Naive thymus-derived CD4-positive, alpha-beta T cell (primary cell): ENCODE measurements at regions of chr17 and their contacts with region 1.

Region 1: GRCh38 chr17:75412455-75413317 is 7.2 kb upstream of the GRB2 start:
- DNase-seq: peak; percentile 52 to 82 (median 73)
- ATAC-seq: peak; percentile 88
- H3K4me3 ChIP-seq: peak overlapping the region; percentile 25
- H3K4me3 Mint-ChIP-seq: peak overlapping the region; percentile 23 to 75 (median 60)
- H3K27ac ChIP-seq: peak overlapping the region; percentile 19
- H3K27ac Mint-ChIP-seq: peak overlapping the region in 6 of 9 donors; percentile 15 to 87 (median 45)
- H3K4me1 ChIP-seq: peaks cover 3 to 13% of the 10 kb centered on the region in 2 donors
- H3K4me1 Mint-ChIP-seq: peaks cover 14 to 26% (median 23%) of the 10 kb centered on the region in 7 donors
- H3K27me3 ChIP-seq: no peaks in the 10 kb centered on the region
- H3K27me3 Mint-ChIP-seq: peaks cover 0 to 27% (median 0%) of the 10 kb centered on the region in 5 donors

Region 2: GRCh38 chr17:75199886-75200618 is 212.6 kb before region 1 on chr17:
- CTCF ChIA-PET with region 1: interaction called, 3 read pairs
- POLR2A ChIA-PET with region 1: no interaction called
- intact Hi-C with region 1: loop called in 1 of 2 experiments (anchors 2 kb)
- DNase-seq: no peak
- ATAC-seq: no peak
- H3K4me3 ChIP-seq: no peak overlapping the region
- H3K4me3 Mint-ChIP-seq: no peak overlapping the region
- H3K27ac ChIP-seq: no peak overlapping the region
- H3K27ac Mint-ChIP-seq: no peak overlapping the region
- H3K4me1 ChIP-seq: no peaks in the 10 kb centered on the region
- H3K4me1 Mint-ChIP-seq: peaks cover 4 to 12% (median 8%) of the 10 kb centered on the region in 7 donors
- H3K27me3 ChIP-seq: no peaks in the 10 kb centered on the region
- H3K27me3 Mint-ChIP-seq: no peaks in the 10 kb centered on the region

Region 3: GRCh38 chr17:75238684-75239191 is 173.9 kb before region 1 on chr17:
- CTCF ChIA-PET with region 1: interaction called, 4 read pairs
- POLR2A ChIA-PET with region 1: no interaction called
- intact Hi-C with region 1: loop called (anchors 1 kb)
- DNase-seq: peak; percentile 33 to 60 (median 55)
- ATAC-seq: peak; percentile 83
- H3K4me3 ChIP-seq: no peak overlapping the region
- H3K4me3 Mint-ChIP-seq: peak overlapping the region in 4 of 10 donors; percentile 38 to 51 (median 46)
- H3K27ac ChIP-seq: no peak overlapping the region
- H3K27ac Mint-ChIP-seq: peak overlapping the region; percentile 7 to 93 (median 85)
- H3K4me1 ChIP-seq: peaks cover 0 to 28% of the 10 kb centered on the region in 2 donors
- H3K4me1 Mint-ChIP-seq: peaks cover 5 to 25% (median 12%) of the 10 kb centered on the region in 7 donors
- H3K27me3 ChIP-seq: no peaks in the 10 kb centered on the region
- H3K27me3 Mint-ChIP-seq: no peaks in the 10 kb centered on the region

Region 4: DNA sequence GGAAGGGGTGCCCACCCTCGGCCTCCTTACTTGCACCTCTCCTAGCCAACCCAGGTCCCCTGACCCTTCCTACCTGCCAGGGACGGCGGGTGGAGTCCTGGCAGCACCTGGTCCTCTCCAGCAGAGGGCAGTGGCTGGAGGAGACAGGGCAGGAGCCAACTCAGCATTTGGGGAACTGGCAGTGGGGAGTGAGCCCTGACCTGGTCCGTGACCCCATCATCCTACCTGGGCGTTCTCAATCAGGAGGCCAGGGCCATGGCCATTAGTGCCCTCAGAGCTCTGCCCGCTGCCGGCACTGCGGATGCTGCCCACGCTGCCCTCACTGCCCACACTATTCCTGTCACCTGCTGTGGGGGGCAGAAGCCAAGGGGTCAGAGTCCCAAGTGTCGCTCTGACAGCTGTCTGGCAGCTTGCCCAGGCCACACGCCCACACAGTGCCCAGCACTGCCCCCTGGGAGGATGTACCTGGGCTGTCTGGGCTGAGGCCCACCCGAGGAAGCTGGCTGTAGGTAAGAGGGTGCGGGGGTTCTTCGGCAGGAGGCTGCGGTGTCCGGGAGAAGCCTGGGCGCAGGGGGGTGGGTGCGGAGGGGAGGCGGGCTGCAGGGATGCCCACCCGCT is 91.8 kb after region 1 on chr17:
- CTCF ChIA-PET with region 1: no interaction called
- POLR2A ChIA-PET with region 1: no interaction called
- intact Hi-C with region 1: no loop called
- DNase-seq: peak in 4 of 9 donors; percentile 26 to 41 (median 38)
- ATAC-seq: peak; percentile 73
- H3K4me3 ChIP-seq: no peak overlapping the region
- H3K4me3 Mint-ChIP-seq: no peak overlapping the region
- H3K27ac ChIP-seq: no peak overlapping the region
- H3K27ac Mint-ChIP-seq: no peak overlapping the region
- H3K4me1 ChIP-seq: no peaks in the 10 kb centered on the region
- H3K4me1 Mint-ChIP-seq: peaks cover 0 to 2% (median 0%) of the 10 kb centered on the region in 7 donors
- H3K27me3 ChIP-seq: no peaks in the 10 kb centered on the region
- H3K27me3 Mint-ChIP-seq: no peaks in the 10 kb centered on the region